ENCODE measurements at regions of chr5 and their contacts with region 1.

Region 1: DNA sequence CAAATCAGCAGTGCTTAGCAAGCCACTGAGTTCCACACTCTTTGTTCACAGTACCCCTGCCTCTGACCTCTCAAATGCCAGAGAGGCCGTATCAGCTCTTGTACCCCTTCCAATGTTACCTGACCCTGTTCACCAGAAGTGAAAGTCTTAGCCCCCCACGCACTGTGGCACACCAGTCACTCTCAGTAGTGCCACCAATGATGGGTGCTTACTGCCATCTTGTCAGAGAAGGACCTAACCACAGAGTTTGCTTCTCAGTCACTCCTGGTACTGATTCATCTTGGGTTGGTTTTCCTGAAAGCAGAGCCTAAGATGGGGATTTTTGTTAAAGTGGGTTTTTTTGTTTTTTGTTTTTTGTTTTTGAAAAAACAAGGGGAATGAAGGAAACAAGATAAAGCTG is 28.8 kb upstream of the PANK3 start:
- DNase-seq: no peak
- H3K4me3 Mint-ChIP-seq: no peak overlapping the region
- H3K27ac Mint-ChIP-seq: peak overlapping the region; percentile 69
- H3K4me1 Mint-ChIP-seq: peaks cover 18% of the 10 kb centered on the region
- H3K27me3 Mint-ChIP-seq: no peaks in the 10 kb centered on the region

Region 2: DNA sequence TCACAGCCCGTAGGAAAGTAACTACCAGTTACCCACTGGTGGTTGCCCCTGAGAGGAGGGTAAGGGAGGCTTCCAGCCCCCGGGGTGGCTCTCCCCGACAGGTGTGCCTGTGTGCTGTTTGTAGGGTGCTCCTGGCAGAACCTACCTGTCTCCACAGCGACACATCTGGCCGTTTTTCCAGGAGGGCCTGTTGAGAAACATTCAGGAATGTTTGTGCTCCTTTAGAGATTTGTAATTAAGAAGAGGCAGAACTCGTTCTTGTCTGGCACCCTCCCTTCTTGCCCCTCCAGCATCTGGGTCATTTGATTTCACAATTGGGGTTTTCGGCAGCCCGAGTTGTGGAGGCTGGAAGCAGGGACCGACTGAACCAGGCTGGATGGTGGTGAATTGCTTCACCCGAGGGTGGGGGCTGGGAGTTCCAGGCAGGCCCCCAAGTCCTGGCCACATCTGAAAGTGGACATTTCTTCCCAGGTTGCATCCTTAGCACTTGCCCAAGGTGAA is 242.3 kb before region 1 on chr5:
- intact Hi-C with region 1: no loop called
- DNase-seq: no peak
- H3K4me3 Mint-ChIP-seq: no peak overlapping the region
- H3K27ac Mint-ChIP-seq: no peak overlapping the region
- H3K4me1 Mint-ChIP-seq: no peaks in the 10 kb centered on the region
- H3K27me3 Mint-ChIP-seq: peaks cover 6% of the 10 kb centered on the region

Region 3: GRCh38 chr5:168472329-168472728 is 135.6 kb before region 1 on chr5:
- intact Hi-C with region 1: no loop called
- DNase-seq: no peak
- H3K4me3 Mint-ChIP-seq: no peak overlapping the region
- H3K27ac Mint-ChIP-seq: no peak overlapping the region
- H3K4me1 Mint-ChIP-seq: no peaks in the 10 kb centered on the region
- H3K27me3 Mint-ChIP-seq: peaks cover 7% of the 10 kb centered on the region

Region 4: GRCh38 chr5:168579488-168580226 is 28.3 kb before region 1 on chr5:
- intact Hi-C with region 1: loop called (anchors 2 kb)
- DNase-seq: peak; percentile 97
- H3K4me3 Mint-ChIP-seq: peak overlapping the region; percentile 77
- H3K27ac Mint-ChIP-seq: peak overlapping the region; percentile 94
- H3K4me1 Mint-ChIP-seq: peaks cover 32% of the 10 kb centered on the region
- H3K27me3 Mint-ChIP-seq: no peaks in the 10 kb centered on the region

Region 5: DNA sequence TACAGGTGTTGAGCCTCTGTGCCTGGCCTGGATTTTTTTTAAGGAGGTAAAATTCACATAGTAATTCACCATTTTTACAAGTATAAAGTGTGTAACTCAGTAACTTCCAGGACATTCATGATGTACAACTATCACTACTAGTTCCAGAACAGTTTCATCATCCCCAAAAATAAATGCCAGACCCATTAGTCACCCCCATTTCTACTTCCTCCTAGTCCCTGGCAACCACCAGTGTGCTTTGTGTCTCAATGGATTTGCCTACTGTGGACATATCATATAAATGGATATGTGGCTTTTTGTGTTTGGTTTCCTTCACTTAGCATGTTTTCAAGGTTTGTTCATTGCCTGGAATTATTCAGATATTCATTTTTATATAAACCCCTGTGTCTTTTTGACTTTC is 43.7 kb after region 1 on chr5:
- intact Hi-C with region 1: no loop called
- DNase-seq: no peak
- H3K4me3 Mint-ChIP-seq: no peak overlapping the region
- H3K27ac Mint-ChIP-seq: no peak overlapping the region
- H3K4me1 Mint-ChIP-seq: no peaks in the 10 kb centered on the region
- H3K27me3 Mint-ChIP-seq: no peaks in the 10 kb centered on the region